PC-3 (cell line): ENCODE measurements at regions of chr4 and their contacts with region 1.

Region 1: DNA sequence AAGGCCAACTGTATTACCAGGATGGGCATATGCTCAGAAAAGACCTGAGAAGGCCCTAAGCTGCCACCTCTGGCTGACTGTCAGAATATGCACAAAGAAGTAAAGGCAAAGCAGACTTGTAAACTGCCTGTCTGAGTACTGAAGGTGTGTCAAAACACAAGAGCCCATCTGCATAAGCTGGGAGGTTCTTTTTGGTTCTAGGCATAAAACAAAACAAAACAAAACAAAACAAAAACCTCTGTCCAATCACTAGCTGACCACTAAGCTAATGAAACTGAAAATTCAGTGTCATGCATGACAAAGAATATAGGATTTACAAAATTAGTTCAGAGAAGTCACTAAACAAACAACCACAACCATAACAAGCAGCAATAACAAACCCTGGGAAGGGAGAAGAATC is 20.6 kb downstream of the SH3D19 start:
- DNase-seq: peak; percentile 43
- ATAC-seq: peak; percentile 82
- H3K4me3 ChIP-seq: no peak overlapping the region
- H3K27ac ChIP-seq: peak overlapping the region; percentile 50
- H3K4me1 ChIP-seq: peaks cover 13% of the 10 kb centered on the region
- H3K27me3 ChIP-seq: no peaks in the 10 kb centered on the region
- CTCF ChIP-seq: no peak

Region 2: DNA sequence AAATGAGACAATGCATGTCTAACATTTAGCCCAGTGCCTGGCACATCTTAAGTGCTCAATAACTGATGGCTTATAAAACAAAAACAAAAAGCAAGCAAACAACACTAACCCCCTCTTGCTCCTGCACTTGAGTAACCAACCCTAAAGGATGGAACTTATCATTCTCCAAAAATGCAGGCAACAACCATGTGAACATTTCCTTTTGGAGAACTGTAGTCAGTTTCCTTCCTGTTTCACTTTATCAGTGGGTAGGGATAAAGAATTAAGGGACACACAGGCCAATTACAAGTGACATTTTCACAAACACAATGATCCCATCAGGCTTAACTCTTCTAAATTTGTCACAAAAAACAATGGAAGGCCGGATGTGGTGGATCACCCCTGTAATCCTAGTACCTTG is 175.0 kb before region 1 on chr4:
- CTCF ChIA-PET with region 1: no interaction called
- POLR2A ChIA-PET with region 1: no interaction called
- intact Hi-C with region 1: no loop called
- DNase-seq: no peak
- ATAC-seq: no peak
- H3K4me3 ChIP-seq: no peak overlapping the region
- H3K27ac ChIP-seq: no peak overlapping the region
- H3K4me1 ChIP-seq: no peaks in the 10 kb centered on the region
- H3K27me3 ChIP-seq: no peaks in the 10 kb centered on the region
- CTCF ChIP-seq: no peak

Region 3: GRCh38 chr4:151291485-151291884 is 13.3 kb before region 1 on chr4:
- CTCF ChIA-PET with region 1: no interaction called
- POLR2A ChIA-PET with region 1: no interaction called
- intact Hi-C with region 1: loop called (anchors 2 kb)
- DNase-seq: peak; percentile 57
- ATAC-seq: peak; percentile 89
- H3K4me3 ChIP-seq: no peak overlapping the region
- H3K27ac ChIP-seq: peak overlapping the region; percentile 75
- H3K4me1 ChIP-seq: peaks cover 25% of the 10 kb centered on the region
- H3K27me3 ChIP-seq: no peaks in the 10 kb centered on the region
- CTCF ChIP-seq: no peak

Region 4: DNA sequence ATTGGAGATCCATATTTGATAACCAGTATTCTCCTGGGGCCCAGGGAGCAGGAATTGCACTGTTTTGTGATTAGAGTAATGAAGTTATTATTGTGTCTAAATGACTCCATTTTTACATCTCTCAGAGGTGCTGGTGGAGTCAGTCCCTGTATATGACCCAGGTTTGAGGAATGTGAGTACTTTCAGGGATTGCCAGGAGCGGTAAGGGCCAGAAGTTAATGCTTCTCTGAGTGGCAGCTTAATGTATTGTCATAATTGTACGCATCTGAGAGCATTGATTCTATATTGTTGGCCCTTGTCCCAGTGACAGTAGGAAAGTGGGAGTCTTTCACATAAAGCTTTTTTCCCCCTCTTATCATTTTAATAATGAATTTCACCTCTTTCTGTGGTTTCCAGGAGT is 309.8 kb after region 1 on chr4:
- CTCF ChIA-PET with region 1: no interaction called
- POLR2A ChIA-PET with region 1: no interaction called
- intact Hi-C with region 1: no loop called
- DNase-seq: no peak
- ATAC-seq: no peak
- H3K4me3 ChIP-seq: no peak overlapping the region
- H3K27ac ChIP-seq: no peak overlapping the region
- H3K4me1 ChIP-seq: peaks cover 13% of the 10 kb centered on the region
- H3K27me3 ChIP-seq: no peaks in the 10 kb centered on the region
- CTCF ChIP-seq: no peak